HCT116 (cell line): ENCODE measurements at regions of chr15 and their contacts with region 1.

Region 1: GRCh38 chr15:75508840-75509532 is 57.5 kb upstream of the SIN3A start:
- DNase-seq: peak; percentile 32
- ATAC-seq: peak; percentile 70
- H3K4me3 ChIP-seq: no peak overlapping the region
- H3K27ac ChIP-seq: no peak overlapping the region
- H3K4me1 ChIP-seq: no peaks in the 10 kb centered on the region
- H3K27me3 ChIP-seq: no peaks in the 10 kb centered on the region
- CTCF ChIP-seq: peak; percentile 59 to 65 (median 64); a peak in 5 of 6 replicates
- POLR2A ChIP-seq: no peak
- RAD21 ChIP-seq: peak; percentile 67

Region 2: DNA sequence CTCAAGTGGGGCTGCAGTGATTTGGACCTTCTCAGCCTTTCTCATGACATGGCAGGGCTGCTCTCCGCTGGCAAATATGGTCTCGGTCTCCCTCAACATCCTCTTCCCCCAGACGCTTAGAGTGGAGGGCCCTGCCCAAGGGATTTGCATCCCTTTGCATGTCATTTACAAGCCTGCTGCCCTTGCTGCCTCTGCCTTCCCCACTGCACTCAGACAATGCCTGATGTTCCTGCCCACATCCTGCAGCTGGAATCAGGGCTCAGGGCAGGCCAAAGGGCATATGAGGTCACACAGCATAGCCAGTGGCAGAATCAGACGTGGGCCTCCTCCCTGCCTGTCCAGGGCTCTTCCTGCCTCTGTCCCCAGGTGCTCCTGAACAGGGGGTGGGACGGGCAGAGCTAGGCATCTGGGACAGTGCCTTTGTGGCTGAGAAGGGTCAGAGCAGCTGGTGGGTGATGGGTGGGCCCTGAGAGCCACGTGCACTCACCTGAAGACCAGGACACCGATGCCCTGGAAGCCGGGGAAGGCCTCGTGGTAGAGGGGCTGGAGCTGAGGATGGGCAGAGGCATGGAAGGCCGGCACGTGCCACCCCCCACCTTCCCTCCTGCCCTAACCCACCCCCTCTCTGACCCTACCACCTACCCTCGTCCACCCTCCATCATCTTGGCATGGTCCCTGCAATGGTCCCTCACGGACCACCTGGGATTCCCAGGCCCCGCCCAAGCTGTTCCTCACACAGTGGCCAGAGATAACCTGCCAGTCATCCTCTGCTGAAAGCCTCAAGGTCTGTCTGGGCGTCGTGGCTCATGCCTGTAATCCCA is 278.2 kb before region 1 on chr15:
- CTCF ChIA-PET with region 1: no interaction called
- POLR2A ChIA-PET with region 1: no interaction called
- RAD21 ChIA-PET with region 1: no interaction called
- intact Hi-C with region 1: no loop called
- DNase-seq: no peak
- ATAC-seq: no peak
- H3K4me3 ChIP-seq: no peak overlapping the region
- H3K27ac ChIP-seq: no peak overlapping the region
- H3K4me1 ChIP-seq: no peaks in the 10 kb centered on the region
- H3K27me3 ChIP-seq: no peaks in the 10 kb centered on the region; the same call in 1 of the 2 replicates
- CTCF ChIP-seq: no peak
- POLR2A ChIP-seq: no peak
- RAD21 ChIP-seq: no peak

Region 3: GRCh38 chr15:75532413-75533147 is 23.6 kb after region 1 on chr15:
- CTCF ChIA-PET with region 1: interaction called, 12 read pairs
- POLR2A ChIA-PET with region 1: no interaction called
- RAD21 ChIA-PET with region 1: interaction called in 1 of 2 experiments, 7 read pairs
- intact Hi-C with region 1: no loop called
- DNase-seq: peak; percentile 49
- ATAC-seq: peak; percentile 91
- H3K4me3 ChIP-seq: no peak overlapping the region
- H3K27ac ChIP-seq: peak overlapping the region; percentile 52
- H3K4me1 ChIP-seq: peaks cover 25 to 32% of the 10 kb centered on the region in 2 experiments
- H3K27me3 ChIP-seq: no peaks in the 10 kb centered on the region
- CTCF ChIP-seq: peak; percentile 17 to 63 (median 57); a peak in 5 of 6 replicates
- POLR2A ChIP-seq: no peak
- RAD21 ChIP-seq: no peak

Region 4: GRCh38 chr15:75684642-75685041 is 175.7 kb after region 1 on chr15:
- CTCF ChIA-PET with region 1: interaction called, 3 read pairs
- POLR2A ChIA-PET with region 1: no interaction called
- RAD21 ChIA-PET with region 1: interaction called in 1 of 2 experiments, 3 read pairs
- intact Hi-C with region 1: loop called (anchors 2 kb)
- DNase-seq: no peak
- ATAC-seq: no peak
- H3K4me3 ChIP-seq: no peak overlapping the region
- H3K27ac ChIP-seq: no peak overlapping the region
- H3K4me1 ChIP-seq: no peaks in the 10 kb centered on the region; a peak in 1 of 4 replicates
- H3K27me3 ChIP-seq: no peaks in the 10 kb centered on the region
- CTCF ChIP-seq: no peak
- POLR2A ChIP-seq: no peak
- RAD21 ChIP-seq: peak; percentile 20; the same call in 1 of the 2 replicates

Region 5: DNA sequence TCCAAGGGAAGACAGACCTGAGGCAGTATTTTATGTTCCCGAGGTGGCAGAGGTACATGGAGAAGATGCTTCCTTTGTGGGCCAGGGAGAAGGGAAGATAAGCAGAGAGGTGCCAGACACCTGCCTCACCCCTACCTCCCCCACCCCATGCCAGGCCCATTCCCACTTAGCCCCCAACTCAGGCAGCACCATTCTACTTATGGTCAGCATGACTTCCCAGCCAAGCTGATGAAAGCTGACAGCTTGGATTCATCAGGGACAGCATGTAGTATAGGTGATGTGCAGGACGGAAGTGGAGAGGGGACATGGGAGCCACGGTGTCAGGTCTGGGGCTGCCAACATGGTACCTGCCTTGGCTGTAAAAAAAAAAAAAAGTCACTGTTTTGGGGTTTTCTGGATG is 261.1 kb after region 1 on chr15:
- CTCF ChIA-PET with region 1: no interaction called
- POLR2A ChIA-PET with region 1: no interaction called
- RAD21 ChIA-PET with region 1: no interaction called
- intact Hi-C with region 1: no loop called
- DNase-seq: no peak
- ATAC-seq: no peak
- H3K4me3 ChIP-seq: no peak overlapping the region
- H3K27ac ChIP-seq: no peak overlapping the region
- H3K4me1 ChIP-seq: peaks cover 0 to under 1% of the 10 kb centered on the region in 2 experiments; a peak in 1 of 4 replicates
- H3K27me3 ChIP-seq: no peaks in the 10 kb centered on the region
- CTCF ChIP-seq: no peak
- POLR2A ChIP-seq: no peak
- RAD21 ChIP-seq: no peak